ENCODE measurements at regions of chr15 and their contacts with region 1.

Region 1: GRCh38 chr15:65792130-65792987 is at the start of gene DENND4A:
- DNase-seq: peak; percentile 95
- ATAC-seq: peak; percentile 83
- H3K4me3 Mint-ChIP-seq: peak within 1 kb of the TSS; percentile 90
- H3K27ac Mint-ChIP-seq: peak within 1 kb of the TSS; percentile 98
- H3K4me1 Mint-ChIP-seq: peaks cover 64% of the 10 kb centered on the region
- H3K27me3 Mint-ChIP-seq: no peaks in the 10 kb centered on the region
- CTCF ChIP-seq: no peak
- total RNA-seq, gene DENND4A: 135 and 166 TPM in 2 replicates

Region 2: GRCh38 chr15:65610871-65611718 is 181.3 kb before region 1 on chr15 and contains the start of gene INTS14:
- CTCF ChIA-PET with region 1: no interaction called
- POLR2A ChIA-PET with region 1: interaction called, 4 read pairs
- intact Hi-C with region 1: loop called (anchors 1 kb)
- DNase-seq: peak; percentile 89
- ATAC-seq: peak; percentile 98
- H3K4me3 Mint-ChIP-seq: peak within 1 kb of the TSS; percentile 92
- H3K27ac Mint-ChIP-seq: peak within 1 kb of the TSS; percentile 91
- H3K4me1 Mint-ChIP-seq: peaks cover 35% of the 10 kb centered on the region
- H3K27me3 Mint-ChIP-seq: no peaks in the 10 kb centered on the region
- CTCF ChIP-seq: no peak
- total RNA-seq, gene INTS14: 37.6 and 41.2 TPM in 2 replicates

Region 3: DNA sequence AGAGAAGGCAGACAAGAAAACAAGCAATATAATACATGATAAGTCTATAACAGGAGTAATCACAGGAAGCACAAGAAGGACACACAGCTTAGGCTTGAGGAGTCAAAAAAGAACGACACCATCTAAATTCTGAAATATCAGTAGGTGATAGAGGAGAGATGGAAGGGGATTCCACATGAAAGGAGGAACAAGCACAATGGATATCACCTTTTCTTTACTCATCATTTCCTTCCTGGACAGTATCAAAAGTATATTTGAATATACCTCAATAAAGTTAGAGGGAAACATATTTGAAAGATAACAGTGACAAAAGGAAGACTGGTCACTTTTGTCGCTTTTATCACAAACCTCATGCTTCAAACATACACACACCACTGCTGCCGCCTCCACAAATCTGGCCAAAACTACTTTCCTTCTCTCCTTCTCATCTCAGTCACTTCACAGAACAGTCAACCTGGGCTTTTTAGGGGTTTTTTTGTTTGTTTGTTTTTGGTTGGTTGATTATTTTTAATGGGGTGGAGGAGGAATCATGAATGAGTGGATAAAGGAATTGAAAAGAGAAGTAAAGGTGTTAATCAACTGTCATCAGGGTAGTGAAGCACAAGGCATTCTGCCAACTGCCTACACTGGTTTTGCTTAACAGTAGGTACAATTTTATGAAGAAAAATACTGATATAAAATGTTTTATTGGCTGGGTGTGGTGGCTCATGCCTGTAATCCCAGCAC is 18.8 kb before region 1 on chr15:
- CTCF ChIA-PET with region 1: interaction called, 6 read pairs
- POLR2A ChIA-PET with region 1: interaction called, 65 read pairs
- intact Hi-C with region 1: loop called (anchors 1 kb)
- DNase-seq: no peak
- ATAC-seq: peak; percentile 71
- H3K4me3 Mint-ChIP-seq: peak overlapping the region; percentile 76
- H3K27ac Mint-ChIP-seq: peak overlapping the region; percentile 94
- H3K4me1 Mint-ChIP-seq: peaks cover 90% of the 10 kb centered on the region
- H3K27me3 Mint-ChIP-seq: no peaks in the 10 kb centered on the region
- CTCF ChIP-seq: no peak

Region 4: GRCh38 chr15:65812916-65813315 is 20.6 kb after region 1 on chr15:
- CTCF ChIA-PET with region 1: interaction called, 4 read pairs
- POLR2A ChIA-PET with region 1: interaction called, 201 read pairs
- intact Hi-C with region 1: no loop called
- DNase-seq: no peak
- ATAC-seq: no peak
- H3K4me3 Mint-ChIP-seq: no peak overlapping the region
- H3K27ac Mint-ChIP-seq: no peak overlapping the region
- H3K4me1 Mint-ChIP-seq: peaks cover 45% of the 10 kb centered on the region
- H3K27me3 Mint-ChIP-seq: no peaks in the 10 kb centered on the region
- CTCF ChIP-seq: no peak

Region 5: GRCh38 chr15:65824031-65824743 is 31.8 kb after region 1 on chr15:
- CTCF ChIA-PET with region 1: interaction called, 7 read pairs
- POLR2A ChIA-PET with region 1: interaction called, 201 read pairs
- intact Hi-C with region 1: loop called (anchors 1 kb)
- DNase-seq: no peak
- ATAC-seq: peak; percentile 37
- H3K4me3 Mint-ChIP-seq: no peak overlapping the region
- H3K27ac Mint-ChIP-seq: peak overlapping the region; percentile 51
- H3K4me1 Mint-ChIP-seq: peaks cover 68% of the 10 kb centered on the region
- H3K27me3 Mint-ChIP-seq: no peaks in the 10 kb centered on the region
- CTCF ChIP-seq: no peak

Region 6: GRCh38 chr15:65856821-65857455 is 64.6 kb after region 1 on chr15:
- CTCF ChIA-PET with region 1: no interaction called
- POLR2A ChIA-PET with region 1: interaction called, 6 read pairs
- intact Hi-C with region 1: loop called (anchors 1 kb)
- DNase-seq: peak; percentile 47
- ATAC-seq: peak; percentile 82
- H3K4me3 Mint-ChIP-seq: no peak overlapping the region
- H3K27ac Mint-ChIP-seq: no peak overlapping the region
- H3K4me1 Mint-ChIP-seq: peaks cover 14% of the 10 kb centered on the region
- H3K27me3 Mint-ChIP-seq: no peaks in the 10 kb centered on the region
- CTCF ChIP-seq: peak; percentile 81

Measured in activated B cell treated with CpG ODN at 0.5 μM for 24 hours (primary cell).